Left lung (tissue), 14 donors: ENCODE measurements at regions of chr2 and their contacts with region 1.

Region 1: GRCh38 chr2:218260742-218261437 is at the start of gene GPBAR1:
- DNase-seq: peak in 2 of 4 donors; percentile 55 to 56
- ATAC-seq: peak; percentile 55
- H3K4me3 ChIP-seq: no peak within 1 kb of the TSS
- H3K27ac ChIP-seq: peak within 1 kb of the TSS; percentile 77 to 82
- H3K4me1 ChIP-seq: peaks cover 20 to 79% of the 10 kb centered on the region in 2 donors
- H3K27me3 ChIP-seq: no peaks in the 10 kb centered on the region
- CTCF ChIP-seq: no peak
- polyA plus RNA-seq, gene GPBAR1: 0.88 to 1.7 (median 1.2) TPM

Region 2: GRCh38 chr2:218180467-218181114 is 80.3 kb before region 1 on chr2:
- intact Hi-C with region 1: loop called in 1 of 2 experiments (anchors 5 kb)
- DNase-seq: no peak
- ATAC-seq: no peak
- H3K4me3 ChIP-seq: no peak overlapping the region
- H3K27ac ChIP-seq: no peak overlapping the region
- H3K4me1 ChIP-seq: no peaks in the 10 kb centered on the region
- H3K27me3 ChIP-seq: no peaks in the 10 kb centered on the region
- CTCF ChIP-seq: no peak